ENCODE measurements at regions of chr19 and their contacts with region 1.

Region 1: DNA sequence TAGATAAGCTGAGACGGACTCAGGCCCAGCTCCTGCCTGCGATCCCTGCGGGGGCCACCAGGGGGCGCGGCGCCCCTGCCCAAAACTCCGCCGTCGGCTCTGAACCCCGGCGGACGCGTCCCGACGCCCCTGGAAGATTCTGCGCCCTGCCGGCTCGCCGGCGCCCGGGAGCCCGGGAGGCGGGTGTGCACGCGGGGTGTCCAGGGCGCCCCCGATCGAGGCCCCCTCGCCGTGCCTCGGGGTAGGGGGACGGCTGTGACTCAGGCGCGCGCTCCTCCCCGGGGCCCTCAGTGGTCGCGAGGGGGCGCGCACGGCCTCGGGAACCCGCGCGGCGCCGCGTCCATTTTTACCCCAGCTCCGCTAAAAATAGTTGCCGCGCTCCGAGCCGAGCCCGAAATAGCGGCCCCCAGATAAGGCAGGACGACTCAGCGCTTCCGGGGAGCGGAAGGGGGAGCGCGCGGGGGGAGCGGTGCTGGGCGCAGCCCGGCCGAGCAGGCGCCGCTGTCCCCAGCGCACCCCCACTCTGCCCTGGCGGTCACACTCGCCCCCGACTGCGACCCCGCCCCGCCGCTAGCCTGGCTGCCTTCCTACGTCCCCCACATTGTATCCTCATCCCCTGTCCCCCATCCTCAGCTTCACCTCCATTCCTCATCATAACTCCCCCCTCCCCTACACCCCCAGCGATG is 16.0 kb upstream of the ERCC1 start:
- DNase-seq: peak; percentile 75 to 96 (median 88)

Region 2: GRCh38 chr19:45478454-45479238 is 38.9 kb after region 1 on chr19:
- intact Hi-C with region 1: loop called (anchors 2 kb)
- DNase-seq: peak; percentile 73 to 94 (median 87)